ENCODE measurements at regions of chr2 and their contacts with region 1.

Region 1: GRCh38 chr2:216578325-216578724 is 54.9 kb upstream of the IGFBP2 start:
- DNase-seq: peak; percentile 49
- ATAC-seq: no peak
- H3K4me3 ChIP-seq: no peak overlapping the region
- H3K27ac ChIP-seq: peak overlapping the region; percentile 56
- H3K4me1 ChIP-seq: peaks cover 30% of the 10 kb centered on the region
- H3K27me3 ChIP-seq: no peaks in the 10 kb centered on the region
- CTCF ChIP-seq: no peak

Region 2: GRCh38 chr2:216519154-216519762 is 59.1 kb before region 1 on chr2:
- CTCF ChIA-PET with region 1: no interaction called
- POLR2A ChIA-PET with region 1: no interaction called
- intact Hi-C with region 1: loop called (anchors 5 kb)
- DNase-seq: peak; percentile 89
- ATAC-seq: peak; percentile 84
- H3K4me3 ChIP-seq: no peak overlapping the region
- H3K27ac ChIP-seq: no peak overlapping the region
- H3K4me1 ChIP-seq: no peaks in the 10 kb centered on the region
- H3K27me3 ChIP-seq: no peaks in the 10 kb centered on the region
- CTCF ChIP-seq: peak; percentile 91

Measured in PC-3 (cell line).